ENCODE measurements at regions of chr19 and their contacts with region 1.

Region 1: GRCh38 chr19:37506387-37507166 is at the start of gene ZNF793:
- DNase-seq: peak; percentile 91
- total RNA-seq, gene ZNF793: 6.0 to 7.4 TPM

Region 2: GRCh38 chr19:37466798-37467607 is 39.6 kb before region 1 on chr19 and contains the start of gene ZNF569:
- intact Hi-C with region 1: loop called in 1 of 2 experiments (anchors 5 kb)
- DNase-seq: peak; percentile 96
- total RNA-seq, gene ZNF569: 5.9 to 8.2 TPM

Measured in posterior vena cava (tissue), 2 donors.